ENCODE measurements at regions of chr3 and their contacts with region 1.

Region 1: DNA sequence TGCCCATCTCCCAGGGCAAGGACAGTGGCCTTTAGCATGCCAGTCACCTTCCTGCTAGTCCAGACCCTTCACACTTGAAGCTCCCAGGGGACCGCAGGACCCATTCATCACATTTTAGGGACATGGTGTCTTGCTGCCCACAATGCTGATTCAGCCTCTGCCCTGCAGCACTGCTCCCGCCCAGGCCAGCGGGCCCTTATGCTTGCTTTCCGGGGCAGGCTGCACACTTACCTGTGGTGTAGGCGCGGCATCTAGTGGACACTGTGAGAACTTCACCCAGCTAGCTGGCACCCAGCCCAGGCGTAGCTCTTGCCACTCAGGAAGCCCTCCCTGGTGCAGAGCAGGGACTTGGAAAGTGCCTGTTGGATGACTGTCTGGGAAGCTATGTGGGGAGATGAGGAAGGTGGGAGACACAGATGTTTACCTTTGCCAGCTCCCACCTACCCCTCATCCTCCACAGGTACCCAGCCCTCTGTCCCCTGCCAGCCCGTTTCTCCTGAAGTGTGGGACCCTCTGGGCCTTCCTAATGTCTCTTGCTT is 26.2 kb upstream of the NR2C2 start:
- DNase-seq: peak; percentile 90
- ATAC-seq: peak; percentile 89
- H3K4me3 Mint-ChIP-seq: no peak overlapping the region
- H3K27ac Mint-ChIP-seq: no peak overlapping the region
- H3K4me1 Mint-ChIP-seq: peaks cover 4% of the 10 kb centered on the region
- H3K27me3 Mint-ChIP-seq: no peaks in the 10 kb centered on the region
- CTCF ChIP-seq: peak; percentile 98

Region 2: DNA sequence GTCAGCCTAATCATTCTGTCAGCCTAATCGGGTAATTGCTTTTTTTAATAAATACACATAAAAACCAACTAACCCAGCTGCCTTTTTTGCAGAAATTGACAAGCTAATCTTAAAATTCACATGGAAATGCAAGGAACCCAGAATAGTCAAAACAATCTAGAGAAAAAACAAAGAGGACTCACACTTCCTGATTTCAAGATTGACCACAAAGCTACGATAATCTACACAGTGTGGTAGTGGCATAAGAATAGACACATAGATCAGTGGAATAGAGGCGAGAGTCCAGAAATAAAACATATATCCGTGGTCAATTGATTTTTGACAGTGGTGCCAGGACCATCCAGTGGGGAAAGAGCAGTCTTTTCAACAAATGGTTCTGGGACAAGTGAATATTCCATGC is 248.6 kb before region 1 on chr3:
- CTCF ChIA-PET with region 1: interaction called, 35 read pairs
- POLR2A ChIA-PET with region 1: no interaction called
- DNase-seq: no peak
- ATAC-seq: no peak
- H3K4me3 Mint-ChIP-seq: no peak overlapping the region
- H3K27ac Mint-ChIP-seq: no peak overlapping the region
- H3K4me1 Mint-ChIP-seq: no peaks in the 10 kb centered on the region
- H3K27me3 Mint-ChIP-seq: no peaks in the 10 kb centered on the region
- CTCF ChIP-seq: no peak

Region 3: GRCh38 chr3:14791343-14791945 is 129.7 kb before region 1 on chr3:
- CTCF ChIA-PET with region 1: interaction called, 74 read pairs
- POLR2A ChIA-PET with region 1: no interaction called
- DNase-seq: peak; percentile 86
- ATAC-seq: peak; percentile 95
- H3K4me3 Mint-ChIP-seq: peak overlapping the region; percentile 57
- H3K27ac Mint-ChIP-seq: no peak overlapping the region
- H3K4me1 Mint-ChIP-seq: peaks cover 8% of the 10 kb centered on the region
- H3K27me3 Mint-ChIP-seq: no peaks in the 10 kb centered on the region
- CTCF ChIP-seq: peak; percentile 82

Region 4: DNA sequence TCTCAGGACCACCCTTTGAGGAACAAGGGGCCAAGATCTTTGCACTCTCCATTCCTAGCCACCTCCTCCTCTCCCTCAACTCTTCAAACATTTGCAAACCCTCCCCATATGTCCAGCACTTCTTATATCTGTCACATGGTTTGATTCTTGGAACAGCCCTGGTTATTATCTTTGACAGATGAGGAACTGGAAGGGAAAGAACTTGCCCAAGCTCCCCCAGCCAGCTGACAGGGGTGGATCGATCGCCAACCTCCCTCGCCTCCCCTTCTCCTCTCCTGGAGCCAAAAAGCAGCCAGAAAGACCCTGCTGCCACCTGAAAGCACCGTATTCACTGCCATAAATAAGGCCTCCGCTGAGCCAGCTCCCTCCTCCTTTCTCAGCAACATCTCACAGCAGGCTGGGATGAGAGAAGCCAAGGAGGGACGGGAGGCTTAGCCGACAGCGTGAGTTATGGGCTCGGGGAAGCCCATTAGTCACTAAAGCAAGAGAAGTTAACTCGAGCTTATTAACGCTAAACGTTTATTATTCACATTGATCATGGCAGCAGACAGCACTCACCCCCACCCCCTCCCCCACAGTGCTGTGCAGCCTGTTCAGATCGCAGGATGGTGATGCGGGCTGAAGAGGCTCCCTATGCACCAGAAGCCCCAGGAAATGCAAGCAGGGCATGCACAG is 124.6 kb before region 1 on chr3:
- CTCF ChIA-PET with region 1: interaction called, 74 read pairs
- POLR2A ChIA-PET with region 1: no interaction called
- DNase-seq: no peak
- ATAC-seq: no peak
- H3K4me3 Mint-ChIP-seq: no peak overlapping the region
- H3K27ac Mint-ChIP-seq: no peak overlapping the region
- H3K4me1 Mint-ChIP-seq: peaks cover 16% of the 10 kb centered on the region
- H3K27me3 Mint-ChIP-seq: peaks cover 4% of the 10 kb centered on the region; the same call in 1 of the 2 replicates
- CTCF ChIP-seq: no peak

Region 5: GRCh38 chr3:14857506-14857905 is 63.6 kb before region 1 on chr3:
- CTCF ChIA-PET with region 1: interaction called, 29 read pairs
- POLR2A ChIA-PET with region 1: no interaction called
- DNase-seq: no peak
- ATAC-seq: peak; percentile 71
- H3K4me3 Mint-ChIP-seq: no peak overlapping the region
- H3K27ac Mint-ChIP-seq: no peak overlapping the region
- H3K4me1 Mint-ChIP-seq: peaks cover 24% of the 10 kb centered on the region
- H3K27me3 Mint-ChIP-seq: no peaks in the 10 kb centered on the region; the same call in 1 of the 2 replicates
- CTCF ChIP-seq: no peak

Region 6: GRCh38 chr3:14863333-14864100 is 57.6 kb before region 1 on chr3:
- CTCF ChIA-PET with region 1: interaction called, 29 read pairs
- POLR2A ChIA-PET with region 1: no interaction called
- DNase-seq: peak; percentile 40
- ATAC-seq: peak; percentile 82
- H3K4me3 Mint-ChIP-seq: no peak overlapping the region
- H3K27ac Mint-ChIP-seq: no peak overlapping the region
- H3K4me1 Mint-ChIP-seq: peaks cover 31% of the 10 kb centered on the region
- H3K27me3 Mint-ChIP-seq: no peaks in the 10 kb centered on the region
- CTCF ChIP-seq: peak; percentile 24; the same call in 1 of the 2 replicates

Region 7: DNA sequence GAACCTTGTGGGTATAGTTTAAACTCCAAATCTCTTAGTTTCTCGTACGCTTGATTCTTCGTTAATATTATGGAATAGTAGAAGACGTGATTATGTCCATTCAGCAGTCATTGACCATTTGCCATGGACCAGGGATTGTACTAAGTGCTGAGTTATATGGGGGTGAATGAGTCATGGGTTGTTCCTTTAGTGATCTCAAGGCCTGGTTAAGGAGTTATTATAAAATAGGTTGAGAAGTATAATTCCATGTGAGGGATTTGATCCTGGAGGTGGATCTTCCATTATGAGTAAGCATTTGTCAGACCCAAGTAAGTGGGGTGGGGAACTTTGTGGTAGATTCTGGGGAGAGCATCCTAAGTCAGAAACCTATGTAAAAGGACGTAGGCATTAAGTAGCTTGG is 41.6 kb after region 1 on chr3:
- CTCF ChIA-PET with region 1: no interaction called
- POLR2A ChIA-PET with region 1: no interaction called
- DNase-seq: no peak
- ATAC-seq: no peak
- H3K4me3 Mint-ChIP-seq: no peak overlapping the region
- H3K27ac Mint-ChIP-seq: no peak overlapping the region
- H3K4me1 Mint-ChIP-seq: peaks cover 4% of the 10 kb centered on the region
- H3K27me3 Mint-ChIP-seq: no peaks in the 10 kb centered on the region
- CTCF ChIP-seq: no peak

Region 8: GRCh38 chr3:15051531-15051930 is 130.4 kb after region 1 on chr3:
- CTCF ChIA-PET with region 1: interaction called, 12 read pairs
- POLR2A ChIA-PET with region 1: no interaction called
- DNase-seq: peak; percentile 77
- ATAC-seq: peak; percentile 97
- H3K4me3 Mint-ChIP-seq: no peak overlapping the region
- H3K27ac Mint-ChIP-seq: 0 out of 2 replicates have a peak overlapping the region, but pooled peaks have one; percentile 62
- H3K4me1 Mint-ChIP-seq: peaks cover 19% of the 10 kb centered on the region
- H3K27me3 Mint-ChIP-seq: no peaks in the 10 kb centered on the region
- CTCF ChIP-seq: peak; percentile 53